Caco-2 (cell line): ENCODE measurements at regions of chr1 and their contacts with region 1.

Region 1: GRCh38 chr1:21937372-21938221 is 487 bp upstream of the HSPG2 start:
- DNase-seq: peak; percentile 79 to 91
- H3K4me3 ChIP-seq: peak overlapping the region; percentile 53
- H3K4me3 Mint-ChIP-seq: peak overlapping the region; percentile 90
- H3K27ac Mint-ChIP-seq: peak overlapping the region; percentile 89
- H3K4me1 ChIP-seq: peaks cover 44% of the 10 kb centered on the region
- H3K4me1 Mint-ChIP-seq: peaks cover 48% of the 10 kb centered on the region
- H3K27me3 ChIP-seq: no peaks in the 10 kb centered on the region
- H3K27me3 Mint-ChIP-seq: no peaks in the 10 kb centered on the region
- CTCF ChIP-seq: no peak

Region 2: DNA sequence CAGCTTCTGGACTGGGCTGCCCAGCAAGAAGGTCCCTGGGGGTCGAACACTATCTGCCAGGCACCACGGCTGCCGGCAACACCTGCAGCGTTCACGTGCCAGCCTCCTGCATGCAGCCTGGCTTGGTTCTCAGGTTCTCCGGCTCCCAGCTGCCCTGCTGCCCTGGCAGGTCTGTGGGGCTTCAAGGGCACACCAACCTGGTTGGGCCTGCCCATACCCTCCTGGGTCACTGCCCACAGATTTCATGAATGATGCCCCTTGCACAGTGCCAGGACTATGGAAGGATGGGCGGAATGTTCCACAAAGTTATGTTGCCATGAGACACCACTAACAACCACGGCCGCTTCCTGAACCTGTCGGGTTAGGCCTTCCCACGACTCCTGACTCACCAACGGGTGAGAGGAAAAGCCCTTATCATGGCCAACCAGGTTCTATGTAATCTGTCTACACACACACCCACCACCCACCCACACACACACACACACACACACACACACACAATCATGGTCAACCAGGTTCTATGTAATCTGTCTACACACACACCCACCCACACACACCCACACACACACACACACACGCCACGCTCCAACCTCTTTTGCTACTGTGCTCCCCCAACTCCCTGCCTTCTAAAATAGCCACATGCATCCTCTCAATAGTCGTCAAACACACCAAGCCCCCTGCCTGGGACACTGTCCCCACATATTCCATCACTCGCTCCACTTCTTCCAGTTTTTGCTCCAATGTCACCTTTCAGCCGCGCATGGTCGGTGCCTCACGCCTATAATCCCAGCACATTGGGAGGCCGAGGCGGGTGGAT is 32.7 kb before region 1 on chr1:
- CTCF ChIA-PET with region 1: interaction called, 5 read pairs
- POLR2A ChIA-PET with region 1: interaction called, 4 read pairs
- intact Hi-C with region 1: loop called (anchors 5 kb)
- DNase-seq: peak in 1 of 2 experiments; percentile 49
- H3K4me3 ChIP-seq: no peak overlapping the region
- H3K4me3 Mint-ChIP-seq: no peak overlapping the region
- H3K27ac Mint-ChIP-seq: peak overlapping the region; percentile 82
- H3K4me1 ChIP-seq: peaks cover 50% of the 10 kb centered on the region
- H3K4me1 Mint-ChIP-seq: peaks cover 44% of the 10 kb centered on the region
- H3K27me3 ChIP-seq: no peaks in the 10 kb centered on the region
- H3K27me3 Mint-ChIP-seq: no peaks in the 10 kb centered on the region
- CTCF ChIP-seq: no peak

Region 3: DNA sequence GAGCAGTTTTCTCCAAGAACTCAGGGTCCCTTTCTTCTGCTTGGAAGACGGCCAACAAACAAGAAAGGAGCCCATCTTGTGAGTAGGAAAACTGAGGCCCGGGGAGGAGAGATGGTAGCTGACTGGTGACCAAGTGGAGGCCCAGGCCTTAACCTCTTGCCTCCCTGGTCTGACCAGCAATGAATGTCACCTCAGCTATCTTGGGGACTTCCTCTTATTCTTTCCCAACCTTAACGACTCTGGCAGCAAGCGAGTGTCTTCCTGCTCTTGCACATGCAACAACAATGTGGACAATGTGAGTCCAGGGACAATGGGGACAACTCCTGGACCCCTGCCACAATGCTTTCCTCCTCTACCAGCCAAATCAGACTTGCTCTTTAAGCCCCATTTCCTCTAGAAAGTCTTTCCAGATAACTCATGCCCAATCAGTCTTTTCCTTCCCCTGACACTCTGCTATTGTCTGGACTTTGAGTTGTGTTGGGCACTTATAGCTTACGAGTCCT is 13.0 kb before region 1 on chr1:
- CTCF ChIA-PET with region 1: interaction called, 3 read pairs
- POLR2A ChIA-PET with region 1: interaction called, 23 read pairs
- intact Hi-C with region 1: no loop called
- DNase-seq: no peak
- H3K4me3 ChIP-seq: no peak overlapping the region
- H3K4me3 Mint-ChIP-seq: no peak overlapping the region
- H3K27ac Mint-ChIP-seq: peak overlapping the region; percentile 95
- H3K4me1 ChIP-seq: peaks cover 95% of the 10 kb centered on the region
- H3K4me1 Mint-ChIP-seq: peaks cover 49% of the 10 kb centered on the region
- H3K27me3 ChIP-seq: no peaks in the 10 kb centered on the region
- H3K27me3 Mint-ChIP-seq: no peaks in the 10 kb centered on the region
- CTCF ChIP-seq: no peak